HepG2 (cell line): ENCODE measurements at regions of chr17 and their contacts with region 1.

Region 1: GRCh38 chr17:4074831-4075495 is 67.9 kb downstream of the ZZEF1 start:
- DNase-seq: peak; percentile 46
- ATAC-seq: peak; percentile 67
- H3K4me3 ChIP-seq: no peak overlapping the region
- H3K27ac ChIP-seq: no peak overlapping the region
- H3K4me1 ChIP-seq: no peaks in the 10 kb centered on the region
- H3K27me3 ChIP-seq: no peaks in the 10 kb centered on the region
- CTCF ChIP-seq: peak; percentile 81
- EP300 ChIP-seq: no peak
- POLR2A ChIP-seq: no peak
- RAD21 ChIP-seq: peak; percentile 52

Region 2: GRCh38 chr17:3913531-3914311 is 161.2 kb before region 1 on chr17:
- CTCF ChIA-PET with region 1: interaction called, 9 read pairs
- POLR2A ChIA-PET with region 1: no interaction called
- in situ Hi-C with region 1: loop called (anchors 10 kb)
- intact Hi-C with region 1: no loop called
- DNase-seq: peak; percentile 51
- ATAC-seq: peak; percentile 84
- H3K4me3 ChIP-seq: no peak overlapping the region
- H3K27ac ChIP-seq: no peak overlapping the region
- H3K4me1 ChIP-seq: peaks cover 32% of the 10 kb centered on the region
- H3K27me3 ChIP-seq: peaks cover 2 to 35% of the 10 kb centered on the region in 2 experiments; a peak in 4 of 5 replicates
- CTCF ChIP-seq: peak; percentile 99
- EP300 ChIP-seq: no peak
- POLR2A ChIP-seq: no peak
- RAD21 ChIP-seq: peak; percentile 94

Region 3: DNA sequence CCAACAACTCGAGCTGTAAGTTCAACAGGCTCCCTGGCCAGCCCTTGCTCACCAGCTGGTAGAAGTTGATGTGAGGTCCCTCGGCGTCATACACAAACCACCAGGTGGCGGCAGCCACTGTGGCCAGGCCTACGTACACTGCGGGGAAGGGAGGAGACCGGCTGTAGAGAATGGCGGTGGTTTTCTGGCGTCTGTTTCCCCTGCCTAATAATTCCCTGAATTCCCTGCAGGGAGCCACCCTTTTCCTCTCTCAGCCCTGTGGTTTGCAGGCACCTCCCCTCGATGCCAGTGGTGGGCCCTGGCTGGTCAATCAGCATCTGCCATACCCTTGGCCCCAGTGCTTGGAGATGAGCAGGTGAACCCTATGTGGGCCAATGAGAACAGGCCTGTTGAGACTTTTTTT is 139.8 kb before region 1 on chr17:
- CTCF ChIA-PET with region 1: interaction called, 9 read pairs
- POLR2A ChIA-PET with region 1: no interaction called
- in situ Hi-C with region 1: no loop called
- intact Hi-C with region 1: loop called (anchors 1 kb)
- DNase-seq: peak; percentile 73
- ATAC-seq: peak; percentile 97
- H3K4me3 ChIP-seq: no peak overlapping the region
- H3K27ac ChIP-seq: no peak overlapping the region
- H3K4me1 ChIP-seq: peaks cover 29% of the 10 kb centered on the region
- H3K27me3 ChIP-seq: no peaks in the 10 kb centered on the region; a peak in 1 of 5 replicates
- CTCF ChIP-seq: peak; percentile 96
- EP300 ChIP-seq: 0 out of 4 replicates have a peak, but pooled peaks of 1 of the 2 experiments have one; percentile 17
- POLR2A ChIP-seq: no peak
- RAD21 ChIP-seq: peak; percentile 89

Region 4: GRCh38 chr17:4004517-4005295 is 70.3 kb before region 1 on chr17:
- CTCF ChIA-PET with region 1: no interaction called
- POLR2A ChIA-PET with region 1: no interaction called
- in situ Hi-C with region 1: no loop called
- intact Hi-C with region 1: loop called (anchors 2 kb)
- DNase-seq: peak; percentile 63
- ATAC-seq: peak; percentile 78
- H3K4me3 ChIP-seq: peak overlapping the region in 2 of 3 experiments; percentile 33 to 63; a peak in 3 of 6 replicates
- H3K27ac ChIP-seq: peak overlapping the region; percentile 68
- H3K4me1 ChIP-seq: peaks cover 32% of the 10 kb centered on the region
- H3K27me3 ChIP-seq: no peaks in the 10 kb centered on the region
- CTCF ChIP-seq: peak; percentile 91
- EP300 ChIP-seq: no peak
- POLR2A ChIP-seq: 0 out of 4 replicates have a peak, but pooled peaks of 1 of the 2 experiments have one; percentile 43
- RAD21 ChIP-seq: peak; percentile 97

Region 5: GRCh38 chr17:4090898-4091297 is 15.9 kb after region 1 on chr17:
- CTCF ChIA-PET with region 1: no interaction called
- POLR2A ChIA-PET with region 1: no interaction called
- in situ Hi-C with region 1: no loop called
- intact Hi-C with region 1: no loop called
- DNase-seq: no peak
- ATAC-seq: no peak
- H3K4me3 ChIP-seq: no peak overlapping the region
- H3K27ac ChIP-seq: no peak overlapping the region
- H3K4me1 ChIP-seq: no peaks in the 10 kb centered on the region
- H3K27me3 ChIP-seq: no peaks in the 10 kb centered on the region
- CTCF ChIP-seq: no peak
- EP300 ChIP-seq: no peak
- POLR2A ChIP-seq: no peak
- RAD21 ChIP-seq: no peak